PC-3 (cell line): ENCODE measurements at regions of chr3 and their contacts with region 1.

Region 1: GRCh38 chr3:141998669-141999290 is 122.3 kb downstream of the ATP1B3 start:
- DNase-seq: peak; percentile 23
- ATAC-seq: no peak
- H3K4me3 ChIP-seq: no peak overlapping the region
- H3K27ac ChIP-seq: no peak overlapping the region
- H3K4me1 ChIP-seq: no peaks in the 10 kb centered on the region
- H3K27me3 ChIP-seq: no peaks in the 10 kb centered on the region
- CTCF ChIP-seq: peak; percentile 58

Region 2: DNA sequence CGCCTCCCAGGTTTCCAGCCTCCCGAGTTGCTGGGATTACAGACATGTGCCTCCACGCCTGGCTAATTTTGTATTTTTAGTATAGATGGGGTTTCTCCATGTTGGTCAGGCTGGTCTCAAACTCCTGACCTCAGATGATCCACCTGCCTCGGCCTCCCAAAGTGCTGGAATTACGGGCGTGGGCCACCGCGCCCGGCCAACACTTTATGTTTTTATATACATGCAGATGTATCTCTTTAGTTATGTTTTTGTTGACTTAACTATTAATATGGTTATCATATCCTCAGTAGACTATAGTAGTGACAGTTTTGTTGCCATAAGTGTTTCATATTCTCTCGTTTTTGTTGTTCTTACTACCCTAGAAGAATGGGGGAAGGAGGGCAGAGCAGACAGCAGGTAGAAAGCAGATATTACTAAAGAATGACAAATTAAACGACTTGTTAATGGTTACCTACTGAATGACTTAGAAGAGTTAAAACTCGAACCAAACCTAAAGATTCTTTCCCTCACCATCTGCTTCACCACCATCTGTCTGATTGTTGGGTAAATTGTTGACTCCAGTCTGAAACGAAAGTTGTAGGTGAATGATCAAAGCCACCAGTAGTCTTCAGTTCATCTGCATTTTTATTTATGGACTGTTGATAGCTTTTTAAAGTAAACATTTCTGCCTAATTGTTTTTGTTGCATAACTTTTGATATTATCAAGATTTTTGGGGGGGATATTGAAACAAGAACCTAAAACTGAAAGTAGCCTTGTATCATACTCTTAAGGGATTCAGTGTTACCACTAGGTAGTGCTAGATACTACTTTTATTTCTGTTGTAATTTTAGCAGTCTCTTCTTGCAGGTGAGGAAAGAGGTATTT is 422.7 kb before region 1 on chr3:
- CTCF ChIA-PET with region 1: no interaction called
- POLR2A ChIA-PET with region 1: no interaction called
- intact Hi-C with region 1: loop called (anchors 10 kb)
- DNase-seq: peak; percentile 24
- ATAC-seq: peak; percentile 48
- H3K4me3 ChIP-seq: no peak overlapping the region
- H3K27ac ChIP-seq: no peak overlapping the region
- H3K4me1 ChIP-seq: no peaks in the 10 kb centered on the region
- H3K27me3 ChIP-seq: no peaks in the 10 kb centered on the region
- CTCF ChIP-seq: peak; percentile 62

Region 3: DNA sequence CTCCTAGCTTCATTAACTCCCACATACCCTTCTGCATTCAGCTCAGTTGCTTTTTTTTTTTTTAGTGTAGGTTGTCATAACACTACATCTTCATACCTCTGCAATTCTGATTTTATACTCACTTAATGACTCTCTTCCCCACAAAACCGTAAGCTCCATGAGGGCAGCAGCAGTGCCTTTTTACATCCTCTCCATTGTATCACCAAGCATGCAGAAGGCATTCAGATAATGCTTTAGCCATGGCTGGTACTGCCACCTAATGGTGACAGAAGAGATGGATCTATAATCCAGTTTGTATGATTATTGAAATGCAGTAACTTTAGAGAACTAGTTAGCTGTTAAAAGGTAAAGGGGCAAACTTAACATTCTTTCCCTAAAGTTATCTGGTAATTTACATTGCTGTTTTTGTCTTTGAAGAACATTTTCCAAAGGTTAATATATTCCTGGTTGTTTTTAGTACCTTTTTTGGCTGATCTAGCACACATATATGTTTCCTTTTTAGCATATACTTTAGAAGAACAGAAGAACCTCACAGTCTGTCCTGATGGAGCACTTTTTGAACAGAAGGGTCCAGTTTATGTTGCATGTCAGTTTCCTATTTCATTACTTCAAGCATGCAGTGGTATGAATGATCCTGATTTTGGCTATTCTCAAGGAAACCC is 85.5 kb before region 1 on chr3:
- CTCF ChIA-PET with region 1: no interaction called
- POLR2A ChIA-PET with region 1: no interaction called
- intact Hi-C with region 1: loop called (anchors 10 kb)
- DNase-seq: peak; percentile 71
- ATAC-seq: peak; percentile 70
- H3K4me3 ChIP-seq: no peak overlapping the region
- H3K27ac ChIP-seq: no peak overlapping the region
- H3K4me1 ChIP-seq: no peaks in the 10 kb centered on the region
- H3K27me3 ChIP-seq: no peaks in the 10 kb centered on the region
- CTCF ChIP-seq: peak; percentile 75

Region 4: DNA sequence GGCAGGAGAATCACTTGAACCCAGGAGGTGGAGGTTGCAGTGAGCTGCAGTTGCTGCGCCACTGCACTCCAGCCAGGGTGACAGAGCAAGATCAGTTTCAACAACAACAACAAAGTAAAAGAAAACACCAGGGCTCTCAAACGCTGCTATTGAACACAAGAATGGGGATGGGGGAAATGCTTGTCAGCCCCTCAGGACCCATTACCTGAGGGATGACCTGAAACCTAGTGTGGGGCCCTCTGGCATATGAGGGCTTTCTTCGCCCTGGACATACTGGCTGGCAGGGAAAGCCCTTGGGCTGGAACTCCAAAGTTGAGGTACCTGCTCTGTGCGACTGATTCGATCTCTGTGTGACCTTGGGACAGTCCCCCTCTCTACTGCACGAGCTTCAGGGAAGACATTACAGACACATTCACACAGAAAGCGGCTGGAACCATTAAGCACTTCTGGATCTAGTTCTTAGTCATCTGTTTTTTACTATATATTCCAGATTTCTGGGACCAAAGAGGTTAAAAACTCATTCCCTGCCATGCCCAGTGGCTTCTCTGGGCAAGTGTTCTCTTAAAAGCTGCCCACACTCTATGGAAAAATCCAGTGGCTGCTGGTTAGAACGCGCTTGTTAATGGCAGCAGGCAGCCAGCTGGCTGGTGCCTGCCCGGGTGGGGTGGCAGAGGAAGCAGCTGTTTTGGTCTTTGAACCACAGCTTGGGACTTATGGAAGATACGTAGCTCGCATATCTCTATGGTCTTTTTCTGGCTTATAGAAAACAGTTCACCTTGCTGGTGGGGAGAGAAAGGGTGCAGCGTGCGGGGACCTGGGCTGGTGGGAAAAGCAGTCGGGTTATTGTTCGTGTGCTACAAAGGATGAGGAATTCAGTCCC is 65.1 kb before region 1 on chr3:
- CTCF ChIA-PET with region 1: no interaction called
- POLR2A ChIA-PET with region 1: no interaction called
- intact Hi-C with region 1: no loop called
- DNase-seq: no peak
- ATAC-seq: no peak
- H3K4me3 ChIP-seq: no peak overlapping the region
- H3K27ac ChIP-seq: no peak overlapping the region
- H3K4me1 ChIP-seq: peaks cover 4% of the 10 kb centered on the region; the same call in 1 of the 2 replicates
- H3K27me3 ChIP-seq: no peaks in the 10 kb centered on the region
- CTCF ChIP-seq: no peak

Region 5: GRCh38 chr3:141959921-141960554 is 38.7 kb before region 1 on chr3:
- CTCF ChIA-PET with region 1: no interaction called
- POLR2A ChIA-PET with region 1: no interaction called
- intact Hi-C with region 1: loop called (anchors 1 kb)
- DNase-seq: peak; percentile 68
- ATAC-seq: peak; percentile 79
- H3K4me3 ChIP-seq: no peak overlapping the region
- H3K27ac ChIP-seq: peak overlapping the region; percentile 0; the same call in 1 of the 2 replicates
- H3K4me1 ChIP-seq: peaks cover 18% of the 10 kb centered on the region
- H3K27me3 ChIP-seq: no peaks in the 10 kb centered on the region
- CTCF ChIP-seq: no peak

Region 6: DNA sequence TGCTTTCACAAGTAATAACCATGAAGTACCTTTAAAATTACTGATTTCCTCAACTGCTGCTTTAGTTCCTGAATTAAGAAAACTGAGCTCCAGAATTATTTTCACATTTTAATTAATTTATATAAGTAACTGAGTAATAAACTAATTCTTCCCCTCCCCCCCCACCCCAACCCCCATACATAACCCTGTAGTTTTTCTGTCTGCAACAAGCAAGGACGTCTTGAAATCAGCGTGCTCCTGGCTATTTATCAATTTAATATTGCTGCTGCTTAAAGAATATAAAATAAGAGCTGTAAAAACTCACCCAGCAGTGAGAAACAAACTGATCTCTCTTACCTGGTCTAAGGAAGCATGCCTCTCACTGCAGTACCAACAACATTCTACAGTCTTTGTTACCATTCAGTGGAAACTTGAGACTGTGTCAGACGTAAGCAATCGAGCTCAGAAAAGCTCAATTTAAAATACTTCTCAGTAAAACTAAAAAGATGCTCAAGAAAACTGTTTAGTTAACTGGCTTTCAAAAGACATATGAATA is 29.5 kb after region 1 on chr3:
- CTCF ChIA-PET with region 1: no interaction called
- POLR2A ChIA-PET with region 1: interaction called, 23 read pairs
- intact Hi-C with region 1: no loop called
- DNase-seq: peak; percentile 70
- ATAC-seq: peak; percentile 85
- H3K4me3 ChIP-seq: peak overlapping the region; percentile 67
- H3K27ac ChIP-seq: no peak overlapping the region
- H3K4me1 ChIP-seq: no peaks in the 10 kb centered on the region
- H3K27me3 ChIP-seq: no peaks in the 10 kb centered on the region
- CTCF ChIP-seq: no peak